Right cardiac atrium (tissue), 5 donors: ENCODE measurements at regions of chr17 and their contacts with region 1.

Region 1: GRCh38 chr17:75749545-75750389 is 15.2 kb downstream of the GALK1 start:
- DNase-seq: peak; percentile 88 to 95 (median 93)
- ATAC-seq: peak; percentile 68 to 73
- H3K4me3 ChIP-seq: no peak overlapping the region
- H3K27ac ChIP-seq: no peak overlapping the region
- H3K4me1 ChIP-seq: peaks cover 2% of the 10 kb centered on the region
- H3K27me3 ChIP-seq: no peaks in the 10 kb centered on the region

Region 2: DNA sequence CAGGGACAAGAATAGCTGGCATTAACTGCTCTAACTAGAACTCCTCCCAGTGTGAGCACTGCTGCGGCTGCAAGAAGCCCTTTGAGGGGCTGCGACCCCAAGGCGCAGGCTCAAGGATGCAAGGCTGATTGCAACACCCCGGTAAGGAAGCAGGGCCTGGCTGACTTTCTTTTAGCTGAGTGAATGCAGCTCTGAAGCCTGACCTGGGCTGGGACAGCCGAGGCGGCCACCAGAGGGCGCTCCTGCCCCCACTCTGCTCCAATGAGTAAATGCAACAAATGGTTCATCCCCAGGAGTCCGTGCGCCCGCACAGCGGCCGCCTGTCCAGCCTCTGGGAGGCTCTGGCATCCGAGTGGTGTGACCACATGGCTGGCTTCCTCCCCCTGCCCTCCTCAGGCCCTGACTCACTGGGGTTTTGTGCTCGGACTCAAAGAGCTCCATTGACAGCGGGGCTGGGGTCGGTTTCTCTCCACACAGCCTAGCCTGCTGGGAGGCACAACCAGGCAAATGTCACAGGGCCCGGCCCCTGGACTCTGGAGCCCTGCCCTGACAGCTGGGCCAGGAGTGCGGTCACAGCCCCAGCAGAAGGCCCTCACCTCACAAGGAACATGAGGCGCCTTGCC is 116.8 kb before region 1 on chr17 and contains the start of gene SMIM5:
- intact Hi-C with region 1: loop called in 2 of 4 experiments (anchors 5 kb)
- DNase-seq: peak; percentile 91 to 96 (median 96)
- ATAC-seq: peak; percentile 77 to 80
- H3K4me3 ChIP-seq: no peak within 1 kb of the TSS
- H3K27ac ChIP-seq: peak within 1 kb of the TSS; percentile 78
- H3K4me1 ChIP-seq: peaks cover 9% of the 10 kb centered on the region
- H3K27me3 ChIP-seq: no peaks in the 10 kb centered on the region
- total RNA-seq, gene SMIM5: 6.9 to 12.2 (median 9.6) TPM

Region 3: GRCh38 chr17:75645889-75646637 is 103.7 kb before region 1 on chr17:
- intact Hi-C with region 1: no loop called
- DNase-seq: peak; percentile 21 to 58 (median 58)
- ATAC-seq: peak; percentile 45 to 66
- H3K4me3 ChIP-seq: no peak overlapping the region
- H3K27ac ChIP-seq: no peak overlapping the region
- H3K4me1 ChIP-seq: no peaks in the 10 kb centered on the region
- H3K27me3 ChIP-seq: no peaks in the 10 kb centered on the region

Region 4: GRCh38 chr17:75667021-75667790 is 82.6 kb before region 1 on chr17 and contains the starts of genes RECQL5 and SAP30BP:
- intact Hi-C with region 1: loop called in 1 of 4 experiments (anchors 5 kb)
- DNase-seq: peak; percentile 98 to 99 (median 99)
- ATAC-seq: peak; percentile 99
- H3K4me3 ChIP-seq: peak within 1 kb of the TSS; percentile 98
- H3K27ac ChIP-seq: peak within 1 kb of the TSS; percentile 96
- H3K4me1 ChIP-seq: no peaks in the 10 kb centered on the region
- H3K27me3 ChIP-seq: no peaks in the 10 kb centered on the region
- total RNA-seq, gene RECQL5: 7.9 to 19.9 (median 14.8) TPM
- total RNA-seq, gene SAP30BP: 51.0 to 66.5 (median 56.3) TPM

Region 5: GRCh38 chr17:75679706-75680442 is 69.9 kb before region 1 on chr17:
- intact Hi-C with region 1: loop called (anchors 2 to 5 kb)
- DNase-seq: peak; percentile 66 to 75 (median 67)
- ATAC-seq: peak; percentile 84 to 94
- H3K4me3 ChIP-seq: no peak overlapping the region
- H3K27ac ChIP-seq: peak overlapping the region; percentile 56
- H3K4me1 ChIP-seq: peaks cover 7% of the 10 kb centered on the region
- H3K27me3 ChIP-seq: no peaks in the 10 kb centered on the region

Region 6: DNA sequence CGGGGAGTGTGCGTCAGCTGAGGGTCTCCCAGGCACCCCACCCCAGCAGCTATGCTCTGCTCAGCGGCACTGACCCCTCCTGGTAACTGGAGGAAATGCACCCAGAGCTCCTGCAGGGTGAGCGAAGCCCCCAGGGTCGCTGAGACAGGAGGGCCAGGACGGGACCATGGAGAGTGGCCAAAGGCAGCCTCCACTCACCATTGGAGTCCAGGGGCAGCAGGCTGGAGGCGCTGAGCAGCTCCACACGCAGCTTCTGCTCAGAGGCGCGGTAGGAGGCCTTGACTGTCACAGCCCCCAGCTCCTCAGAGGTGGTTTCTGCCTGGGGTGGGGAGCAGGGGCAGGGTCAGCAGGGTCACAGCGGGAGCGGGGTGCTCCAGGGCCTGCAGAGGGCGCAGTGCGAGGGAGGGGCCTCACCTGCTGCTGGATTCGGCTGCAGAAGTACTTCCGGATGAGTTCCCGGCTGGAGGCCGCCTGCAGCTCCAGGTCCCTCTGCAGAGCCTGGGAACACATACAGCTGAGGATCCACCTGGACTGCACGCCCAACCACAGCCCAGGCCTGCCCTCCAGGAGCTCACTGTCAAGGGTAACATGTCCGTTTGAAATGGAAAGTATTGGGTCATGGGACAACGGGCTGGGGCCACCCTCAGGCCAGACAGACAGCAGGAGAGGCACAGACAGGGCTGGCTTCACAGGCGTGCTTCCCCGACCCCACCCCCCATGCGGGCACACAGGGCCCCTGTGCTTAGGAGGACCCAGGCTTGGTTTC is 80.6 kb after region 1 on chr17:
- intact Hi-C with region 1: no loop called
- DNase-seq: peak in 1 of 3 donors; percentile 57
- ATAC-seq: no peak
- H3K4me3 ChIP-seq: no peak overlapping the region
- H3K27ac ChIP-seq: no peak overlapping the region
- H3K4me1 ChIP-seq: peaks cover 9% of the 10 kb centered on the region
- H3K27me3 ChIP-seq: no peaks in the 10 kb centered on the region